ENCODE measurements at regions of chr2 and their contacts with region 1.

Region 1: DNA sequence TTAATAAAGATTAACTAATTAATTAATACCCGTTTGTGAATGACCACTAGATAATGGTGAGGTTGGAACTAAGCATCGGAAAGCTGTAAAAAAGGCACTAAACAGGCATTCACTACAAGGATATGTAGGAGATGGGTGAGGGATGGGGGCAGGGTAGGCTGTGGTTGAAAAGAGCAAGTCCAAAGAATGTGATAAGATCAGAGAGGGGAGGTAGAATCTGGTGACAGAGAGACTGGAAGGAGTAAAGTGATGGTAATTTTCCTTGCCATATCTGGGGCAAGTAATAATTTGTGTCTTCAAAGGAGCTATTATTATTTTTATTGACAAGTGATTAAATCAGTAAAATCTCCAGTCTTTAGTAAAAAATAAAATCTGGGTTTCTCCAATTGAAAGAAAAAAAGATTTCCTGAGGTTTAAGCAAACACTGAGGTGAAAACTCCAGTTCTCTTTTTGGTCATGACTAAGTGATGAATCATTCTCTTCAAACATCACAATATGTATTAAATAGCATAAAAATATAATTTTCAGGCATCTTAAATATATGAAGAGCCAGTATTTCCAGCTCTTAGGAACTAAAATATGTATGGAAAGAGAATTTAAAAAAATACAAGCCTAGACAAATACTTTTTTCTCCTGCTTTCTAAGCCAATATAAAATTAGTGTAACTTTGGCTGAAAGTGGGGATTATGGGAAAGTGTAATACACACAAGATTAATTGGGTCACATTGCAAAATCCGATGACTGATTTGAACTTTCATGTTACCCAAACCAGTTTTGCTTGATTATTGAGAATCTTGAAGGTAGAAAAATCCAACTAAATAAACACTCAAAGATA is 259.1 kb upstream of the RBMS1 start:
- DNase-seq: peak; percentile 91
- ATAC-seq: peak; percentile 56
- H3K4me3 ChIP-seq: peak overlapping the region; percentile 51
- H3K27ac ChIP-seq: peak overlapping the region; percentile 99
- H3K4me1 ChIP-seq: peaks cover 61% of the 10 kb centered on the region
- H3K27me3 ChIP-seq: no peaks in the 10 kb centered on the region
- CTCF ChIP-seq: no peak

Region 2: DNA sequence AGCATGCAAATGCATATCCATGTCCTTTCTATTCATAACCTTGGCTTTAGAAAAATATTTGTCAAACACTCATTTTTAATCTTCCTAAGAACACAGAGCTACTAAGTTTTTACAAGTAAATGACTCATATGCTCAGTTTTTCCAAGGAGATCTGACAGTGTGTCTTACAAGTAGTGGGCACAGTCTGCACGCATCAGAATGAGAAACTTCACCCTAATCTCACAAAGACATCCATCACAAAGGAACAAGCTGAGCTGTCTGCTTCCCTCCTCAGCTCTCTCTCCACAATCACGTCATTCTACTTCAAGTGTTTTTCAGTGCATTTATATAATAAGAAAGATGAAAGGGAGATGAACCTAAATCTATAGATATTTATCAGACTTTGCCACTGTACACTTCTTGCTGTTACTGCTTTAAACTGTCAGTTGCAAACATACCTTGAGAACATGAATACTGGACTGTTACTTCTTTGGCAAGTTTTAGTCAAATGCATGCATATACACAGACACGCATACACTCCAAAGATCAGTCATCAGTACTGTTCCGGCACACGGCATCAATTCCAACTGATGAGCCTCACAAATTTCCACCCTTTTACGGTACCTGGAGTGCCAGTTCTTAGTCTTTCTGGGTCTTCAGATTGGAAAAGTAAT is 334.8 kb before region 1 on chr2:
- CTCF ChIA-PET with region 1: no interaction called
- POLR2A ChIA-PET with region 1: no interaction called
- intact Hi-C with region 1: loop called (anchors 5 kb)
- DNase-seq: peak; percentile 90
- ATAC-seq: peak; percentile 76
- H3K4me3 ChIP-seq: peak overlapping the region; percentile 55
- H3K27ac ChIP-seq: peak overlapping the region; percentile 95
- H3K4me1 ChIP-seq: peaks cover 64% of the 10 kb centered on the region
- H3K27me3 ChIP-seq: no peaks in the 10 kb centered on the region
- CTCF ChIP-seq: no peak

Region 3: DNA sequence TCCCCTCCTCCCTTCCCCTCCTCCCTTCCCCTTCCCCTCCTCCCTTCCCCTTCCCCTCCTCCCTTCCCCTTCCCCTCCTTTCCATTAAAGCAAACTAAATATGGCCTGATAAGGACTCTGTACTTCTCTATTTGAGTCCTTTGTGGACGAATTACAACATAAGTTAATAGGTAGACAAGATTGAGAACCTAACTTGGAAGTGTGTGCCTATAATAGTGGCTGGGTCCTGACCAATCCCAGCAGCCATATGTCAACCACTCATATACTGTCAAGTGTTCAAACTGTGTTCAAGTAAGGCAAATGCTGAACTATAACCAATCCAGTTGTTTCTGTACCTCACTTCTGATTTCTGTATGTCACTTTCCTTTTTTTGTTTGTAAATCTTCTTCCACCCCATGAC is 162.0 kb before region 1 on chr2:
- CTCF ChIA-PET with region 1: no interaction called
- POLR2A ChIA-PET with region 1: no interaction called
- intact Hi-C with region 1: loop called (anchors 2 kb)
- DNase-seq: no peak
- ATAC-seq: no peak
- H3K4me3 ChIP-seq: no peak overlapping the region
- H3K27ac ChIP-seq: no peak overlapping the region
- H3K4me1 ChIP-seq: no peaks in the 10 kb centered on the region
- H3K27me3 ChIP-seq: no peaks in the 10 kb centered on the region
- CTCF ChIP-seq: no peak

Region 4: DNA sequence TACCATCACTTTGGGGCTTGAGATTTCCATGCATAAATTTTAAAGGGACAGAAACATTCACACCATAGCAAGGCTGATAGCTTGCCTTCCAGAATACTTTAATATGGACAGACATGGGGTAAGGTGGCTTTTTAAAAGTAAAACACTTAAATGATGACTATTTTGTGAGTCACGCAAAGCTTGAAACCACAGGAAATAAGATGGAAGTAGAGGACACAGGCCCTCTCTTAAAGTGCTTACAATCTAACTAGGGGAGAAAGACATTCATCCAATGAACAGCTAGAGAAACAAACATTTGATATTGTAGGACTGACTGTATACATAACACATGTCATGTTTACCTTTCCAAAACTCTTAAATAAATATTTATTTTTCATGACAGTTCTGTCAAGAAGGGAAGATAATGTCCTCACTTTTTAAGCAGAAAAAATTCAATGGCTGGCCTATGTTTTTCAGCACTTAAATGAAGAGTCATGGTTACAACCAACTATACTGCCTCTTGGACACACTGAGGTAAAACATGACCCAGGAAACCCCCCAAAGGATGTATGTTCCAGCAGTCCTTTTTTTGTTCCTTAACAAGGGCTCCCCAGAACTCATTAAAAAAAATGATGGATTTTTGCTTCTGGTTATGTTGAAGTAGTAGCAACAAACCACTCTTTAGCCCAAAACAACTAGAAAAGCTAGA is 139.1 kb before region 1 on chr2:
- CTCF ChIA-PET with region 1: no interaction called
- POLR2A ChIA-PET with region 1: no interaction called
- intact Hi-C with region 1: loop called (anchors 2 kb)
- DNase-seq: peak; percentile 96
- ATAC-seq: peak; percentile 93
- H3K4me3 ChIP-seq: no peak overlapping the region
- H3K27ac ChIP-seq: peak overlapping the region; percentile 61
- H3K4me1 ChIP-seq: peaks cover 20% of the 10 kb centered on the region
- H3K27me3 ChIP-seq: no peaks in the 10 kb centered on the region
- CTCF ChIP-seq: no peak

Region 5: GRCh38 chr2:160652236-160652635 is 100.5 kb before region 1 on chr2:
- CTCF ChIA-PET with region 1: no interaction called
- POLR2A ChIA-PET with region 1: no interaction called
- intact Hi-C with region 1: loop called (anchors 5 kb)
- DNase-seq: no peak
- ATAC-seq: no peak
- H3K4me3 ChIP-seq: no peak overlapping the region
- H3K27ac ChIP-seq: no peak overlapping the region
- H3K4me1 ChIP-seq: peaks cover 53% of the 10 kb centered on the region
- H3K27me3 ChIP-seq: no peaks in the 10 kb centered on the region
- CTCF ChIP-seq: no peak

Region 6: GRCh38 chr2:160869411-160869810 is 116.7 kb after region 1 on chr2:
- CTCF ChIA-PET with region 1: no interaction called
- POLR2A ChIA-PET with region 1: no interaction called
- intact Hi-C with region 1: loop called (anchors 1 kb)
- DNase-seq: peak; percentile 95
- ATAC-seq: peak; percentile 97
- H3K4me3 ChIP-seq: peak overlapping the region; percentile 6; the same call in 1 of the 2 replicates
- H3K27ac ChIP-seq: peak overlapping the region; percentile 88
- H3K4me1 ChIP-seq: peaks cover 28% of the 10 kb centered on the region
- H3K27me3 ChIP-seq: no peaks in the 10 kb centered on the region
- CTCF ChIP-seq: no peak

Region 7: GRCh38 chr2:160918906-160919503 is 166.3 kb after region 1 on chr2:
- CTCF ChIA-PET with region 1: no interaction called
- POLR2A ChIA-PET with region 1: no interaction called
- intact Hi-C with region 1: loop called (anchors 5 kb)
- DNase-seq: peak; percentile 71
- ATAC-seq: peak; percentile 88
- H3K4me3 ChIP-seq: no peak overlapping the region
- H3K27ac ChIP-seq: no peak overlapping the region
- H3K4me1 ChIP-seq: peaks cover 7% of the 10 kb centered on the region; the same call in 1 of the 2 replicates
- H3K27me3 ChIP-seq: no peaks in the 10 kb centered on the region
- CTCF ChIP-seq: peak; percentile 88